ENCODE measurements at regions of chr9 and their contacts with region 1.

Region 1: DNA sequence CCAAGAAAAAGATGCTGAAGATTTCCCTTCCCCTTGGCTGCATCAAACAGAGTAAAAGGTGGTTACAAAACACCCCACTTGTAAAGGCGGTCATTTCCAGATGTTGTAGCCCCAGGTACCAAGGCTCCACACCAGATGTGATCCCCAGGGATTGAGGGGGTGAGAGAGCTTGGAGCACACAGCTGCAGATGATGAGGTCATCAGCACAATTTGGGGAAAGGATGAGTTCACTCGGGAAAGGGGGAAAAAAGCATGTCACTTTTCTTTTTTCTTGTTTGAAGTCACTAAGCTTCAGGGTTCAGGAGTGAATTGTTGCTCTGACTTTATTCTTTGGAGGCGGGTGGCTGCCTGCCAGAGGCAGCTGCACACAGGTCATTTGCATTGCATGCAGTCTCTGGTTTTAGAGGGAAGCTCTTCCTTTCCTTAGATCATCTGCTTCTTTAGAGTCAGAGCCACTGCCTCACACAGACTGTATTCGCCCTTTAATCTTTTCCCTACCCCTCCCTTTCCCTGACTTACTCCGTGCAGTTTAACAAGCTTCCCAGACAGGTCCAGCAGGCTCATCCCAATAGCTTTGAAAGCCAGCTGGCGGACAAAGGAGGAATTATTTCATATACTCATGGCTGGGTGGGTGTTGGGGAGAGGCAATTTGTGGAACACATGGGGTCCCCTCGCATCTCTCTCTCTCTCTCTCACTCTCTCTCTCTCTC is 409.3 kb upstream of the SLC24A2 start:
- DNase-seq: no peak
- H3K4me3 Mint-ChIP-seq: no peak overlapping the region
- H3K27ac Mint-ChIP-seq: no peak overlapping the region
- H3K4me1 Mint-ChIP-seq: no peaks in the 10 kb centered on the region
- H3K27me3 Mint-ChIP-seq: peaks cover 16% of the 10 kb centered on the region
- CTCF ChIP-seq: no peak

Region 2: GRCh38 chr9:20242510-20243189 is 44.5 kb after region 1 on chr9:
- CTCF ChIA-PET with region 1: no interaction called
- intact Hi-C with region 1: loop called (anchors 10 kb)
- DNase-seq: no peak
- H3K4me3 Mint-ChIP-seq: no peak overlapping the region
- H3K27ac Mint-ChIP-seq: no peak overlapping the region
- H3K4me1 Mint-ChIP-seq: no peaks in the 10 kb centered on the region
- H3K27me3 Mint-ChIP-seq: peaks cover 38% of the 10 kb centered on the region
- CTCF ChIP-seq: no peak

Region 3: DNA sequence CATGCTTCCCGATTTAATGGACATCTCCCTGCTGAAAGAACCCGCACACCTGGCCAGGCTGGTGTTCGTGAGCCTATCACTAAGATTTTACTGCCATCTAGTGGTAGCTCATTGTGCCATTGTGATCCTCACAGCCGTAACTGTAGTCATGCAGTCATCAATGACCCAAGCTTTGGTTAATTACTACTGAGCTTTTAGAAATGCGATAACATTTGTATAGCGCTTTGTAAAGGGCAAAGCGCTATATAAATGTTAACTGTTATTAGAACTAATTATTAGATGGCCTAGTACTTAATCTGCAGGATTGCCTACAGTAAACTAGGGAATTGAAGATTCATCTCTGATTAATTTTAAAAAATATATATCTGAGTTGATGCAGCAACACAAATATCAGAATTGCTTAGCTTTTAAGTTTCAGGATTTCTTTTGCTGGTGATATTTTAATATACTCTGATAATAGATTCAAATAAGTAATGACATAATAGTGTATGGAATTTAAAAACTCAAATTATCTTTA is 743.1 kb after region 1 on chr9:
- CTCF ChIA-PET with region 1: no interaction called
- intact Hi-C with region 1: loop called (anchors 2 kb)
- DNase-seq: peak; percentile 39
- H3K4me3 Mint-ChIP-seq: no peak overlapping the region
- H3K27ac Mint-ChIP-seq: no peak overlapping the region
- H3K4me1 Mint-ChIP-seq: no peaks in the 10 kb centered on the region
- H3K27me3 Mint-ChIP-seq: no peaks in the 10 kb centered on the region
- CTCF ChIP-seq: peak; percentile 47